CD8-positive, alpha-beta memory T cell (primary cell): ENCODE measurements at regions of chr4 and their contacts with region 1.

Region 1: DNA sequence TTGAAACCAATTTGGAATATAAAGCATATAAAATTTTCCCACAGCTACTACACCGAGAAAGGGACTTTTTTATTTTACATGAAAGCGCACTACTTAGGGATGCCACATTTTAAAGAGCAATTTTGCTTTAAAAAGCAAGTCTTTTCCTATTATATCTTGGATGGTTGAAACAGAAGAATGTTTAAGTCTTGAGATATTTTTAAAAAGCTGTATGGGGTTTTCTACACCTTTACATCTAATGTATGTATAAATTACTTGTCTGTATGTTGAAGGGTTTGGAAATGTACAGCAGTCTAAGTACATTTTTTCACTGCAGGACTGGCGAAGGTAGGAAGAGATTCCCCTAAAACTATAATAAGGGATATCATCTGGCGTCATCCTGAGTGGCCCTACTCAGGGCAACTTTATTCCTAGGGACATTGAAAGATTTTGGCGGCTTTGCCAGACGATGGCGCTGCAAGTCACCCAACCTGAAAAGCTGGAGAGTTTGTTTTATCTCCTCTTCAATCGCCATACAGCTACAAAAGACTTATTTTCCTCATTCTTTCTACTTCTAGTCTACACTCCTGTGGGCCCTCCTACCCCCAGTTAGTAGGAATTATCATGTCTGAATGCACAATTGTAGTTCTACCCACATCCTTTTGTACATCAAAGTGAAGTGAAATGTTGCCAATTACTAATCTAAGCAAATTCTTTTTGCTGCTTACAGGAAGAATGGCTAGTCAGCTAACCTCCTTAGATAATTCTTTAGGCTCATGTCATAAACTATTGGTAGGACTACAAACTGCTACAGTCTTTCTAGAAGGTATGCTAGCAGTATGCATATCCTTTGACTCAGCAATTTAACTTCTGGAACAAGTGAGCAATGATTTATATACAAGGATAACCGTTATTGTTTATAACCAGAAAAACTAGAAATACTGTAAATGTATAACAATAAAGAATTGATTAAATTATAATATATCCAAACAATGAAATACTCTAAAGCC is 782 bp upstream of the NEK1 start:
- DNase-seq: peak; percentile 54 to 79 (median 64)
- H3K4me3 ChIP-seq: peak overlapping the region; percentile 60
- H3K4me3 Mint-ChIP-seq: peak overlapping the region; percentile 94 to 99 (median 97)
- H3K27ac ChIP-seq: peak overlapping the region; percentile 99
- H3K27ac Mint-ChIP-seq: peak overlapping the region; percentile 99 to 100 (median 100)
- H3K4me1 ChIP-seq: peaks cover 32% of the 10 kb centered on the region
- H3K4me1 Mint-ChIP-seq: peaks cover 26 to 61% (median 35%) of the 10 kb centered on the region in 3 donors
- H3K27me3 ChIP-seq: no peaks in the 10 kb centered on the region
- H3K27me3 Mint-ChIP-seq: peaks cover 0 to 2% of the 10 kb centered on the region in 2 donors

Region 2: GRCh38 chr4:169659716-169660670 is 46.8 kb after region 1 on chr4:
- CTCF ChIA-PET with region 1: interaction called, 16 read pairs
- POLR2A ChIA-PET with region 1: interaction called, 4 read pairs
- DNase-seq: peak; percentile 12 to 84 (median 70)
- H3K4me3 ChIP-seq: peak overlapping the region; percentile 5
- H3K4me3 Mint-ChIP-seq: peak overlapping the region; percentile 23 to 76 (median 54)
- H3K27ac ChIP-seq: peak overlapping the region; percentile 76
- H3K27ac Mint-ChIP-seq: peak overlapping the region; percentile 73 to 96 (median 84)
- H3K4me1 ChIP-seq: no peaks in the 10 kb centered on the region
- H3K4me1 Mint-ChIP-seq: peaks cover 24 to 50% (median 45%) of the 10 kb centered on the region in 3 donors
- H3K27me3 ChIP-seq: no peaks in the 10 kb centered on the region
- H3K27me3 Mint-ChIP-seq: no peaks in the 10 kb centered on the region

Region 3: GRCh38 chr4:169723207-169723965 is 110.2 kb after region 1 on chr4:
- CTCF ChIA-PET with region 1: interaction called, 10 read pairs
- POLR2A ChIA-PET with region 1: no interaction called
- DNase-seq: no peak
- H3K4me3 ChIP-seq: no peak overlapping the region
- H3K4me3 Mint-ChIP-seq: no peak overlapping the region
- H3K27ac ChIP-seq: no peak overlapping the region
- H3K27ac Mint-ChIP-seq: peak overlapping the region in 1 of 8 donors; percentile 30
- H3K4me1 ChIP-seq: no peaks in the 10 kb centered on the region
- H3K4me1 Mint-ChIP-seq: no peaks in the 10 kb centered on the region
- H3K27me3 ChIP-seq: no peaks in the 10 kb centered on the region
- H3K27me3 Mint-ChIP-seq: no peaks in the 10 kb centered on the region

Region 4: DNA sequence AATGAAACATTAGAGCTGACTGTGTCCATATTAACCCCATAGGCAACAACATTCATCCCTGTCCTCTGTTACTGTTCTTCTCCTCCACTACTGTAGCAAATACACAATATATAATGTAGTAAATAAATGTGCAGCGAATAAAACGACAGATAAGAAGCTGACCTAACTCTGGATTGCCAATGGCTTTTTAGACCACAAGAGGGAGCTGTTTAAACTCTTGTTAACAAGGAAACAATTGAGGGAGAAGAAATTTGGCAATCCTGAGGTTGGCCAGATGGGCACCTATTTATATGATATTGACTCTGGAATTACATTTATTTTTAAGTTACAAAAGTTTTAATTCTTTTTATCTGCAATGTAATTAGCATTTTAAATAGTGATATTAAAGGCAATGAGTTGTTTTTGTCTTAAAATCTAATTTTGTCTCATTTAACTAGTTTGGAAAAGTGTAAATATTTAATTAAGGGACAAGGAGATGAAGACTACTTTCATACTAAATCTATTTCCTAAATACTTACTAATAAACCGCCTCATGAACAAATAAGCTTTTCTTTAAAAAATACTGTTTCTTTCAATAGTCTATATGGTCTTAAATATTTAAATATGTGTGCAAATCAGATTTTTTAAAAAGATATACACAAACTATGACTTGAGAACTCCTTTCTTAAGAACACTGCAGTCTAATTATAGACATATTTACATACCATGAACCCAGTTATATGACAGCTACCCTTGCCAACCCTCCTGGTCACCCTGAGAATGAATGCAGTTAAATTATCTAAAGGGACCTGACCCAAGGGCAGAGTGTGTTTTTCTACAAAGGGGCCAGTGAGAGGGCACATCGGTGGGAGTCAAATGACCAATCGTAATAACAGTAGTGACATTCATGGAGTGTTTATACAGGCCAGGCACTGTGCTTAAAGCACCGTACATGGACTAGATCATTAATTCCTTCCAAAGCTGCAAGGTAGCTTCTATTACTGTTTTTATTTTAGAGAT is 197.5 kb after region 1 on chr4:
- CTCF ChIA-PET with region 1: interaction called, 21 read pairs
- POLR2A ChIA-PET with region 1: no interaction called
- DNase-seq: peak in 2 of 5 donors; percentile 20 to 46
- H3K4me3 ChIP-seq: no peak overlapping the region
- H3K4me3 Mint-ChIP-seq: no peak overlapping the region
- H3K27ac ChIP-seq: no peak overlapping the region
- H3K27ac Mint-ChIP-seq: no peak overlapping the region
- H3K4me1 ChIP-seq: no peaks in the 10 kb centered on the region
- H3K4me1 Mint-ChIP-seq: no peaks in the 10 kb centered on the region
- H3K27me3 ChIP-seq: no peaks in the 10 kb centered on the region
- H3K27me3 Mint-ChIP-seq: peaks cover under 1 to 32% of the 10 kb centered on the region in 2 donors

Region 5: GRCh38 chr4:170047771-170048354 is 434.7 kb after region 1 on chr4:
- CTCF ChIA-PET with region 1: interaction called, 11 read pairs
- POLR2A ChIA-PET with region 1: no interaction called
- DNase-seq: peak; percentile 30 to 56 (median 35)
- H3K4me3 ChIP-seq: no peak overlapping the region
- H3K4me3 Mint-ChIP-seq: no peak overlapping the region
- H3K27ac ChIP-seq: no peak overlapping the region
- H3K27ac Mint-ChIP-seq: no peak overlapping the region
- H3K4me1 ChIP-seq: no peaks in the 10 kb centered on the region
- H3K4me1 Mint-ChIP-seq: no peaks in the 10 kb centered on the region
- H3K27me3 ChIP-seq: no peaks in the 10 kb centered on the region
- H3K27me3 Mint-ChIP-seq: peaks cover 0 to 10% of the 10 kb centered on the region in 2 donors